Mammary epithelial cell (primary cell): ENCODE measurements at regions of chr17 and their contacts with region 1.

Region 1: GRCh38 chr17:4074831-4075495 is 67.9 kb downstream of the ZZEF1 start:
- DNase-seq: peak; percentile 25
- H3K4me3 ChIP-seq: no peak overlapping the region
- H3K27ac ChIP-seq: no peak overlapping the region
- H3K4me1 ChIP-seq: no peaks in the 10 kb centered on the region
- H3K27me3 ChIP-seq: no peaks in the 10 kb centered on the region
- CTCF ChIP-seq: peak; percentile 68

Region 2: DNA sequence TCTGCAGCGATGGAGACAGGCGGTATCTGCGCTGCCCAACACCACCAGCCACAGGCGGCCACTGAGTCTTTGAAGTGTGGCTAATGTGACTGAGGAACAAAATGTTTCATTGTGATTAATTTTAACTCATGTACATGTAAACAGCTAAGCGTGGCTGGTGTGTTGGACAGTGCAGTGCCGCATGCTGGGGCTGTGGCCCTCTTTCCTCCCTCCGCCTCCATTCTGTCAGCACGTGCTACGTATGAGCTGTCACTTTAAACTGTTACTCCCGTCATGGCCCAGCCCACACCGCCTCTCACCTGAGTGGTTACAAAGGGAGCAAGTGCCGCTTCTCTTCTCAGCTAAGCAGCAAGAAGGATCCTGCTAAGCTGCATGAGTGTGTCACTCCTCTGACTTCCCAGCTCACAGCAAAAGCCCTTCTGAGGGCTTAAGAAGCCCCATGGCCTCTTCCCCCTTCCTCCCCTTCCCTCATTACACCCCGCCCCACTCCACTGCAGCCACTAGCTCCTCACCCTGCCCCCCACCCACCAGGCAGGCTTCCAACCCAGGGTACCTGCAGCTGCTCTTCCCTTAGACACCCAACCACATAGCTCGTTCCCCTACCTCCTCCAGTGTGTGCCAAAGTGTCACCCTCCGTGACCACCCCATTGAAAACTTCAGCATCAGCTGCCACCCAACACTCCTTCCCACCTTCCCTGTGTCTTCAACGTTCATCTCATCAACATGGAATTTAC is 336.2 kb before region 1 on chr17:
- CTCF ChIA-PET with region 1: no interaction called
- dilution Hi-C with region 1: no loop called
- in situ Hi-C with region 1: no loop called
- intact Hi-C with region 1: loop called (anchors 10 kb)
- DNase-seq: peak; percentile 76
- H3K4me3 ChIP-seq: peak overlapping the region in 1 of 3 experiments; percentile 19
- H3K27ac ChIP-seq: no peak overlapping the region
- H3K4me1 ChIP-seq: peaks cover 10% of the 10 kb centered on the region
- H3K27me3 ChIP-seq: no peaks in the 10 kb centered on the region
- CTCF ChIP-seq: no peak

Region 3: GRCh38 chr17:3859940-3860339 is 215.0 kb before region 1 on chr17:
- CTCF ChIA-PET with region 1: no interaction called
- dilution Hi-C with region 1: loop called (anchors 10 kb)
- in situ Hi-C with region 1: no loop called
- intact Hi-C with region 1: loop called (anchors 2 kb)
- DNase-seq: no peak
- H3K4me3 ChIP-seq: no peak overlapping the region
- H3K27ac ChIP-seq: no peak overlapping the region
- H3K4me1 ChIP-seq: no peaks in the 10 kb centered on the region
- H3K27me3 ChIP-seq: no peaks in the 10 kb centered on the region
- CTCF ChIP-seq: no peak

Region 4: DNA sequence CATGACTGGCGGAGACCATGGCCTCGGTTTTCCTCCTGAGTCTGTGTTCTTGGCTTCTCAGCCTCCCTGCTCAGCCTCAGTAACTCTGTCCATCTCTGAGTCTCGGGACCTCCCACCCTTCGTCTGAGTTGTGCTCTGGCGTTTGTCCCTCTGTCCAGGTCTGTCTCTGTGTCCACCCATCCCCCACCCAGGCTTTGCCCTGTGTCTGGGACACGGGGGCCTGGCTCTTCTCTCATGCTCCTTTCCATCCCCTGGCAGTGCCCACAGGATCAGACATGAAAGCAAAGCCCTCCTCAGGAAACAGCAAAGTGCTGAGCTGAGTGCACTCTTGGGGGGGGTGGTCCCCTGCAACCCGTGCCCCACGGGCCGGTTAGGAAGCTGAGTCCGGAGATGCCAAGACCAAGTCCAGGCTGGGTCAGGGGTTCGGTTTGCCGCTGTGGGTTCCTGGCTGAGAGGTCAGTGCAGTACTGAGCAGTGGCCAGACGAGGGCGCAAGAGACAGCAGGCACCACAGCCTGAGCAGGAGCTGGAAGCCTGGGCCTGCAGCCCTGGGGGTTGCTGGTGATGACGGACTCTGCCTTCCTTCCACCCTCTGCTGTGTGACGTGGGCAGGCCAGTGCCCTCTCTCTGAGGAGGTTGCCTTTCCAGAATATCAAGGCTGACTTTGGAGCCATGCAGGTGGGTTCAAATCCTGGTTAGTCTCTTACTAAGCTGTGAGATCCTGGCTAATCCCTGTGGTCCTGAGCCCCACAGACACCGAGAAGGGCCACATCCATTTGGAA is 161.2 kb before region 1 on chr17:
- CTCF ChIA-PET with region 1: no interaction called
- dilution Hi-C with region 1: no loop called
- in situ Hi-C with region 1: no loop called
- intact Hi-C with region 1: loop called (anchors 2 kb)
- DNase-seq: peak; percentile 35
- H3K4me3 ChIP-seq: no peak overlapping the region
- H3K27ac ChIP-seq: no peak overlapping the region
- H3K4me1 ChIP-seq: no peaks in the 10 kb centered on the region
- H3K27me3 ChIP-seq: no peaks in the 10 kb centered on the region
- CTCF ChIP-seq: peak; percentile 97 to 98

Region 5: DNA sequence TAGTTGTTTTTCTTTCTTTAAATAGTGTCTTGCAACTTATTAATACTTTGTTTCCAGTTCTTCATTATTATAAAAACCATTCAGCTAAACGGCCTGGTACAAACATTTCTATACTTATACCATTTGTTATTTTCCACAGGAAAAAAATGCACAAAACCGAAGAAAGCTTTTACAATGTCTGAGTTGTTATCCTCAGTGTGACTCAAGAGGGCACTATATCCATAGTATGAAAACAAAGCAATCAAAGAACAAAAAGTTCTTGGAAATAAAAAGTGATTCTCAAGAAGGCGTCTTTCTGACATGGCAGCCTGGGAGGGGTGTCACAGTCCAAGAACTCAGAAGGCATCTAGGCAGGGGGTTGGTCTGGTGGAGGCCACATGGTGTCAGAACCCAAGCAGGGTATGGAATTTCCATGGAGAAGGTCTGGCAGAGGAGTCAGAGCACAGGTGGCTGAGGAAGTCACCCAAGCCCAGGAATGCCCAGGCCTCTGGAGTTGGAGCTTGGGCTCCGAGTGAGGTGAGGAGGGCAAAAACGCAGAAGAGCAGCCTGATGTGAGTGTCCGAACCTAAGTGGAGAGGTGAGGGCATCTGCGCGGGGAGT is 39.8 kb before region 1 on chr17:
- CTCF ChIA-PET with region 1: no interaction called
- dilution Hi-C with region 1: loop called (anchors 5 kb)
- in situ Hi-C with region 1: no loop called
- intact Hi-C with region 1: no loop called
- DNase-seq: no peak
- H3K4me3 ChIP-seq: no peak overlapping the region
- H3K27ac ChIP-seq: no peak overlapping the region
- H3K4me1 ChIP-seq: no peaks in the 10 kb centered on the region
- H3K27me3 ChIP-seq: no peaks in the 10 kb centered on the region
- CTCF ChIP-seq: no peak